ENCODE measurements at regions of chr12 and their contacts with region 1.

Region 1: DNA sequence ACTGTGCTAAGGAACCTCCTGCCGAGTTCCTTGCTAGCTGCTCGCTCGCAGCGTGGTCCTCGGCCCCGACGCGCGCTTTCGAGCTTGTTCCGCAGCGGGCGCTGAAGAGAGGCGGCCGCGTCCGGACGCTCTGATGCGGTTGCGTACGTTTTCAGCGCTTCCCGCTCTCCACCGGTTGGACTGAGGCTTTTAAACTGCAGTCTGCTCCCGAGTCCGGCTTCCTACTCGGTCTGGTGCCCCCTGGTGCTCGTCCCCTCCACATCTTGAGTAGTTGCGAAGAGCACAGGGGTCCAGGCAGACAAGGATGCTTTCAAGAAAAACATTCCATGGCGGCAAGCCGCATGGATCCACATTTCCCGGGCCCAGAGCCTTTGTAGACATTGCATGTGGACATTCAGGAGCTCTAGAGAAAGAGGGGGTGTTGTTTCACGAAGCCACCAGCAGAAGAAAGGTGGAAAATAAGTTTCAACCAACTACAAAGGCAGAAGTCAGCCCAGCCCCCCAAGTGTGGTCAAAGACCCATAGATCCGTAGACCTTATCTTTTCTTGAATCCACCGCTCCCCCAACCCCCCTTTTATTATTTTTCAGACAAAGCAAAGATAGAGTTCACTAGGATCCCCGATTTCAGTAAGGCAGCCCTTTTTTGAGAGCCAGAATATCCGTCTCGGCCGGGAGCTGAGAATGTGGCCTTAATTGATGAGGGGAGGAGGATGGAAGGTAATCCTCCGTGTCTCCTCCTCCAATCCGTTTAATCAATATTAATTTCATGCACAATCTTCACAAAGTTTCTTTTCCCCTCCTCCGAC is 984 bp upstream of the WNK1 start:
- DNase-seq: peak; percentile 93
- H3K4me3 Mint-ChIP-seq: no peak overlapping the region
- H3K27ac Mint-ChIP-seq: no peak overlapping the region
- H3K4me1 Mint-ChIP-seq: peaks cover 25% of the 10 kb centered on the region
- H3K27me3 Mint-ChIP-seq: no peaks in the 10 kb centered on the region

Region 2: GRCh38 chr12:575948-576612 is 175.3 kb before region 1 on chr12:
- CTCF ChIA-PET with region 1: interaction called, 74 read pairs
- DNase-seq: peak; percentile 82
- H3K4me3 Mint-ChIP-seq: peak overlapping the region; percentile 24
- H3K27ac Mint-ChIP-seq: peak overlapping the region; percentile 29
- H3K4me1 Mint-ChIP-seq: peaks cover 45% of the 10 kb centered on the region
- H3K27me3 Mint-ChIP-seq: peaks cover 15% of the 10 kb centered on the region

Region 3: GRCh38 chr12:642633-643474 is 108.5 kb before region 1 on chr12:
- CTCF ChIA-PET with region 1: interaction called, 24 read pairs
- DNase-seq: peak; percentile 85
- H3K4me3 Mint-ChIP-seq: peak overlapping the region; percentile 83
- H3K27ac Mint-ChIP-seq: peak overlapping the region; percentile 87
- H3K4me1 Mint-ChIP-seq: peaks cover 60% of the 10 kb centered on the region
- H3K27me3 Mint-ChIP-seq: no peaks in the 10 kb centered on the region

Region 4: DNA sequence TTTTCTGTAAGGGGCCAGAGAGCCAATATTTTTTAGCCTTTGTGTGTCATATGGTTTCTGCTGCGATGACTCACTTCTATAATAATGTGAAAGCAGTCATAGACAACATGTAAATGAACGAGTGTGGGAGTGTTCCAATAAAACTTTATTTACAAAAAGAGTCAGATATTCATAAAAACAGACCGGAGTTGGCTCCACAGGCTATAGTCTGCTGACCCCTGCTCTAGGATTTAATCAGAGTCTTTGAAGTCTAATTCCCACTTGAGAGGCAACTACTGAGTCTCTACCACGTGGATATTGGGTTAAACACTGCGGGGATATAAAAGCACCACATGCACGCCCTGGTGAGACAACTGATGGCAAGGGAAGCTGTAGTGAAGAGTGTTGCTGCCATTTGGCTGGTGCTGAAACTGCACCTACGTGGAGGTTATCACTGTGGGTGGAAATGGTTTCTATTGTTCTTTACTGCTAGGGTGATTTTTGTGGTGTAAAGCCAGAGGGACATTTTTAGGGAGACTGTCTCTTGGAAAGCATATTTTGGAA is 84.6 kb before region 1 on chr12:
- CTCF ChIA-PET with region 1: interaction called, 22 read pairs
- DNase-seq: peak; percentile 34
- H3K4me3 Mint-ChIP-seq: no peak overlapping the region
- H3K27ac Mint-ChIP-seq: no peak overlapping the region
- H3K4me1 Mint-ChIP-seq: peaks cover 64% of the 10 kb centered on the region
- H3K27me3 Mint-ChIP-seq: peaks cover 25% of the 10 kb centered on the region

Region 5: DNA sequence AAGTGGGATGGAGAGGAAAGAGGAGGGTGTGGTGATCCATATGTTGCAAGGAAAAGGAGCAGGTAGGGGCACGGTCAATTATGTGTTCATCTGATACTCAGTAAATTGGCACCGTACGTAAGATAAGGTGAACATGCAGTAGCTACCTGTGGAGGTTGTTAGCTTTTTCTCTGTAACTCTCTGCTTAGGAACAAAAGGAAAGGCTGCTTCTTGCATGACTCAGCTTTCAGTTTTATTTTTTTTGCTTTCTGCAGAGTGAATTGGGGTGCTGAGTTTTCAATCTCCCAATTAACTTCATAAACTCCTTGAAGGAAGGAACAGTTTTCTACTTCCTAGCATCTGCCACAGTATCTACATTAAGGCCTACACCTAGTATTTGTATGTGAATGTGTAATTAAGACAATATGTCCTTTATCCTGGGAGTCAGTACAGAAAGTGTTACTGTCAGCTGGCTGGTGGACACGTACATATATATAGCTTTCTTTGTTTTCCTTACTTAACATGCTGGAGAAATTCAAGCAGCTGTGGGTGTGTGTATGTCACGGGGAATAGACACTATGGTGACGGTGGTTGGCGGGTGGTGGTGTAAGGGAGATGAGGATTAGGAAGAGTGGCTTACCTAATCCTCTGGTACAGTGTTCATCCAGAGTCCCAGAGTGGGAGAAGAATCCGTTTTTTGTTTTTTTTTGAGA is 39.1 kb before region 1 on chr12:
- CTCF ChIA-PET with region 1: interaction called, 10 read pairs
- DNase-seq: no peak
- H3K4me3 Mint-ChIP-seq: no peak overlapping the region
- H3K27ac Mint-ChIP-seq: no peak overlapping the region
- H3K4me1 Mint-ChIP-seq: peaks cover 14% of the 10 kb centered on the region
- H3K27me3 Mint-ChIP-seq: peaks cover 5% of the 10 kb centered on the region

Region 6: DNA sequence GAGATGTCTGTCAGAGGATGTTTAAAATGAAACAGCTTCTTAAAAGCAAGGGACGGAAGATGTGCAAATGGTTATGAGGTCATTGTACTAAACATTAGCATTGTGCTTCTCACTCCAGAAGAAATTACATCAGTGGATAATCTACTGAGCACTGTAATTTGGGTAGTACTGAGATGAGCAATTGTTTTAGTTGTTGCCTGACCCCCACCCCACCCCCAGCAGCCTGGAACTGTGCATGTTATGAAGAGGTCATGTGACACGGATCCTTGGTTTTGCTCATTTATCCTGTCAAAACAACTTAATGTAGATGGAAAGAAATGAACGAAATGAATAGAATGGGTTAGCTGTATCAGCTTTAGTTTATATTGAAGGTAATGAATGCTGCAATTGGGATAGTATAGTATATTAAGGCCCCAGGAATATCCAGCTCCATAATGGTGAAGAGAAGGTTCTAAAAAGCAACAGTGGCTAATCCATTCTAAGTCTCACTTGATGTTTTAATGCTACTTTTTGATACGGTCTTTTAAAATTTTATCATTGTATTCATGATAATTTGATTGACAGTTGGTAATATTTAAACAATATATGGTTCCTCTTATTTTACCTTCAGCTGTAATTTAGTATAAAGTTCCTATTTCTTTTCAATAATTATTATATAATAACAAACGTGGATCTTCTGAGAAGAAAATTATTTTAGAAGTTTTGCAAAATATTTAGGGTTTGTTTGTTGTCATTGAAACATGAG is 59.4 kb after region 1 on chr12:
- CTCF ChIA-PET with region 1: interaction called, 67 read pairs
- DNase-seq: no peak
- H3K4me3 Mint-ChIP-seq: no peak overlapping the region
- H3K27ac Mint-ChIP-seq: no peak overlapping the region
- H3K4me1 Mint-ChIP-seq: peaks cover 64% of the 10 kb centered on the region
- H3K27me3 Mint-ChIP-seq: no peaks in the 10 kb centered on the region

Measured in activated naive CD4-positive, alpha-beta T cell treated with anti-CD3 and anti-CD28 coated beads, Interleukin-2, amount 10 ng/mL, durations not matched to agents 7 days and 5 days (primary cell).